ENCODE measurements at regions of chr5 and their contacts with region 1.

Region 1: DNA sequence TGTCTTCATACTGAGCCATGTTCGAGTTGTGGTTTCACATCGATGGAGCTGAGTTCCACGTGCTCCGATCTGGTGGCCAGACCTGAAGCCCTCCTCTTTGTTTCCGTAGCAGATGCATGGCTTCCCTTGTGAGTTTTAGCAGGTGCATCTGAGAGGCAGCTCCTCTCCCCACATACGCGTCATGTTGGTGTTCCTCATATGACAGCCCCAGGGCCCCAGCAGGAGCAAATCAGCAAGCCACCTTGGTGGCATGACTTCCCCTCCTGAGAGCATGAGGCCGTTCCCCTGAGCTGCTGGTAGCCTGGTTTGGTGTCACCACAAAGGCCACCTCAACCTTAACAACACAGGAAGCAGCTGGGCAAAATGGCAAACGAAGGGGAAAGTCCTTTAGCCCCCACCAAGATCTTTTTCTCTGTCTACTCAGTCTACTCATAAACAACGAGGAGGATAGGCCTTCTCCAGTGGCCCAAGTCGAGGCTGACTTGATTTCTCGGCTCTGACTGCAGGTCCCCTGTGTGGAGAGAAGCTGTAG is 5.9 kb downstream of the CYFIP2 start:
- DNase-seq: peak; percentile 89 to 96 (median 93)
- H3K4me3 ChIP-seq: peak overlapping the region in 1 of 2 donors; percentile 33
- H3K4me3 Mint-ChIP-seq: peak overlapping the region; percentile 77 to 97 (median 86)
- H3K27ac ChIP-seq: peak overlapping the region; percentile 69
- H3K27ac Mint-ChIP-seq: peak overlapping the region; percentile 96 to 100 (median 98)
- H3K4me1 ChIP-seq: peaks cover 99% of the 10 kb centered on the region
- H3K4me1 Mint-ChIP-seq: peaks cover 73 to 96% (median 83%) of the 10 kb centered on the region in 4 donors
- H3K27me3 ChIP-seq: no peaks in the 10 kb centered on the region
- H3K27me3 Mint-ChIP-seq: no peaks in the 10 kb centered on the region

Region 2: DNA sequence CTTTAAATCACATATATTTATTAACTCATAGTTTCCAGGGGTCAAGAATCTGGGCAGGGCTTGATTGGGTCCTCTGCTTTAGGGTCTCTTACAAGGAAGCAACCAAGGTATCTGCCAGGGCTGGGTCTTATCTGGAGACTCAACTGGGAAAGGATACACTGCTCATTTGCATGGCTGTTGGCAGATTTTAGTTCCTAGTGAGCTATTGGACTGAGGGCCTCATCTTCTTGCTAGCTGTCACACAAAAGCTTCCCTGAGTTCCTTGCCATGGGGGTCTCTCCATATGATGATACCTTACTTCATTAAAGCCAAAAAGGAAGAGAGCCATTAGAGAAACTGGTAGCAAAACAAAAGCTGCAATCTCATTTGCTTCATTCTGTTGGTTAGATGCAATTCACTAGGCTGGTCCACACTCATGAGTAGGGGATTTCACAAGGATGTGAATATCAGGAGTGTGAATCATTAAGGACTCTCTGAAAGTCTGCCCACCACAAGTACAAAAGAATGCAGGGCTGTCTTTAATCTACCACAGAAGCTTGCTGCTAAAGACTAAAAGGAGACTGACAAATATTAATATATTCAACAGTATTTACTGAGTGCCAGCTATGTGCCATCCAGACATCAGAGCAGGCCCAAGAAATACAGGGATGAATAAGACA is 266.8 kb before region 1 on chr5:
- CTCF ChIA-PET with region 1: no interaction called
- POLR2A ChIA-PET with region 1: no interaction called
- intact Hi-C with region 1: no loop called
- DNase-seq: no peak
- H3K4me3 ChIP-seq: no peak overlapping the region
- H3K4me3 Mint-ChIP-seq: no peak overlapping the region
- H3K27ac ChIP-seq: no peak overlapping the region
- H3K27ac Mint-ChIP-seq: no peak overlapping the region
- H3K4me1 ChIP-seq: no peaks in the 10 kb centered on the region
- H3K4me1 Mint-ChIP-seq: no peaks in the 10 kb centered on the region
- H3K27me3 ChIP-seq: no peaks in the 10 kb centered on the region
- H3K27me3 Mint-ChIP-seq: no peaks in the 10 kb centered on the region

Region 3: GRCh38 chr5:157180374-157181264 is 91.2 kb before region 1 on chr5 and contains the start of gene ITK:
- CTCF ChIA-PET with region 1: interaction called, 4 read pairs
- POLR2A ChIA-PET with region 1: interaction called, 53 read pairs
- intact Hi-C with region 1: no loop called
- DNase-seq: peak; percentile 77 to 85 (median 81)
- H3K4me3 ChIP-seq: peak within 1 kb of the TSS; percentile 83 to 99
- H3K4me3 Mint-ChIP-seq: peak within 1 kb of the TSS; percentile 97 to 100 (median 99)
- H3K27ac ChIP-seq: peak within 1 kb of the TSS; percentile 77
- H3K27ac Mint-ChIP-seq: peak within 1 kb of the TSS; percentile 84 to 99 (median 97)
- H3K4me1 ChIP-seq: peaks cover 47% of the 10 kb centered on the region
- H3K4me1 Mint-ChIP-seq: peaks cover 28 to 67% (median 43%) of the 10 kb centered on the region in 4 donors
- H3K27me3 ChIP-seq: no peaks in the 10 kb centered on the region
- H3K27me3 Mint-ChIP-seq: no peaks in the 10 kb centered on the region
- total RNA-seq, gene ITK: 398 to 421 TPM

Region 4: GRCh38 chr5:157198277-157198986 is 73.4 kb before region 1 on chr5:
- CTCF ChIA-PET with region 1: interaction called, 3 read pairs
- POLR2A ChIA-PET with region 1: interaction called, 53 read pairs
- intact Hi-C with region 1: loop called (anchors 5 kb)
- DNase-seq: peak in 1 of 5 donors; percentile 91
- H3K4me3 ChIP-seq: peak overlapping the region in 1 of 2 donors; percentile 19
- H3K4me3 Mint-ChIP-seq: peak overlapping the region; percentile 68 to 86 (median 72)
- H3K27ac ChIP-seq: peak overlapping the region; percentile 64
- H3K27ac Mint-ChIP-seq: peak overlapping the region; percentile 84 to 96 (median 92)
- H3K4me1 ChIP-seq: peaks cover 99% of the 10 kb centered on the region
- H3K4me1 Mint-ChIP-seq: peaks cover 73 to 96% (median 84%) of the 10 kb centered on the region in 4 donors
- H3K27me3 ChIP-seq: no peaks in the 10 kb centered on the region
- H3K27me3 Mint-ChIP-seq: no peaks in the 10 kb centered on the region

Region 5: GRCh38 chr5:157225469-157226422 is 46.1 kb before region 1 on chr5:
- CTCF ChIA-PET with region 1: interaction called, 3 read pairs
- POLR2A ChIA-PET with region 1: interaction called, 14 read pairs
- intact Hi-C with region 1: no loop called
- DNase-seq: peak in 2 of 5 donors; percentile 32 to 62
- H3K4me3 ChIP-seq: no peak overlapping the region
- H3K4me3 Mint-ChIP-seq: peak overlapping the region in 7 of 8 donors; percentile 12 to 85 (median 61)
- H3K27ac ChIP-seq: peak overlapping the region; percentile 52
- H3K27ac Mint-ChIP-seq: peak overlapping the region; percentile 81 to 93 (median 91)
- H3K4me1 ChIP-seq: peaks cover 95% of the 10 kb centered on the region
- H3K4me1 Mint-ChIP-seq: peaks cover 45 to 66% (median 56%) of the 10 kb centered on the region in 4 donors
- H3K27me3 ChIP-seq: no peaks in the 10 kb centered on the region
- H3K27me3 Mint-ChIP-seq: no peaks in the 10 kb centered on the region

Region 6: GRCh38 chr5:157290981-157291711 is 19.3 kb after region 1 on chr5:
- CTCF ChIA-PET with region 1: interaction called, 14 read pairs
- POLR2A ChIA-PET with region 1: interaction called, 80 read pairs
- intact Hi-C with region 1: loop called (anchors 2 kb)
- DNase-seq: no peak
- H3K4me3 ChIP-seq: no peak overlapping the region
- H3K4me3 Mint-ChIP-seq: no peak overlapping the region
- H3K27ac ChIP-seq: no peak overlapping the region
- H3K27ac Mint-ChIP-seq: peak overlapping the region; percentile 22 to 83 (median 71)
- H3K4me1 ChIP-seq: peaks cover 53% of the 10 kb centered on the region
- H3K4me1 Mint-ChIP-seq: peaks cover 36 to 71% (median 49%) of the 10 kb centered on the region in 4 donors
- H3K27me3 ChIP-seq: no peaks in the 10 kb centered on the region
- H3K27me3 Mint-ChIP-seq: no peaks in the 10 kb centered on the region

Region 7: GRCh38 chr5:157312492-157312891 is 40.7 kb after region 1 on chr5:
- CTCF ChIA-PET with region 1: interaction called, 23 read pairs
- POLR2A ChIA-PET with region 1: interaction called, 96 read pairs
- intact Hi-C with region 1: no loop called
- DNase-seq: peak; percentile 55 to 71 (median 61)
- H3K4me3 ChIP-seq: no peak overlapping the region
- H3K4me3 Mint-ChIP-seq: peak overlapping the region in 1 of 8 donors; percentile 2
- H3K27ac ChIP-seq: no peak overlapping the region
- H3K27ac Mint-ChIP-seq: peak overlapping the region; percentile 24 to 94 (median 77)
- H3K4me1 ChIP-seq: peaks cover 33% of the 10 kb centered on the region
- H3K4me1 Mint-ChIP-seq: peaks cover 23 to 42% (median 34%) of the 10 kb centered on the region in 4 donors
- H3K27me3 ChIP-seq: no peaks in the 10 kb centered on the region
- H3K27me3 Mint-ChIP-seq: no peaks in the 10 kb centered on the region

Region 8: DNA sequence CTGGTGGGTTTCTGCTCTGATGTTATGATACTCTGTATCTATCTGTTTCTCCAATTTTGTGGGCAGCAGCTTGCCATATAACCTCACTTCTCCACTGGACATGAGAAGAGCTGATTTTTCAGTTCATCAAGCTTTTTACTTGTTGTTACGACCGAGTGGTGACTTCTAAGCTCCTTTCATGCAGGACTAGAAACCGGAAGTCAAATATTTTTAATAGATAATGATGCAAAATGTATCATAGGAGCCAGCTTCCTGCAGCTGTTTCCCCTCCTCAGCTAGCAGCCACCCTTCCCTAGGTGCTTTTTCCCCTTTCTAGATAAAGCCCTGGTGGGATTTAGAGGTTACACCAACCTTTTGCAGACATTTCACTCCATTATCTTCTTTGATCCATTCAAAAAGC is 320.8 kb after region 1 on chr5:
- CTCF ChIA-PET with region 1: no interaction called
- POLR2A ChIA-PET with region 1: no interaction called
- intact Hi-C with region 1: no loop called
- DNase-seq: no peak
- H3K4me3 ChIP-seq: no peak overlapping the region
- H3K4me3 Mint-ChIP-seq: peak overlapping the region in 6 of 8 donors; percentile 19 to 84 (median 66)
- H3K27ac ChIP-seq: no peak overlapping the region
- H3K27ac Mint-ChIP-seq: peak overlapping the region in 6 of 7 donors; percentile 1 to 88 (median 56)
- H3K4me1 ChIP-seq: peaks cover 59% of the 10 kb centered on the region
- H3K4me1 Mint-ChIP-seq: peaks cover 41 to 62% (median 54%) of the 10 kb centered on the region in 4 donors
- H3K27me3 ChIP-seq: no peaks in the 10 kb centered on the region
- H3K27me3 Mint-ChIP-seq: no peaks in the 10 kb centered on the region

Region 9: DNA sequence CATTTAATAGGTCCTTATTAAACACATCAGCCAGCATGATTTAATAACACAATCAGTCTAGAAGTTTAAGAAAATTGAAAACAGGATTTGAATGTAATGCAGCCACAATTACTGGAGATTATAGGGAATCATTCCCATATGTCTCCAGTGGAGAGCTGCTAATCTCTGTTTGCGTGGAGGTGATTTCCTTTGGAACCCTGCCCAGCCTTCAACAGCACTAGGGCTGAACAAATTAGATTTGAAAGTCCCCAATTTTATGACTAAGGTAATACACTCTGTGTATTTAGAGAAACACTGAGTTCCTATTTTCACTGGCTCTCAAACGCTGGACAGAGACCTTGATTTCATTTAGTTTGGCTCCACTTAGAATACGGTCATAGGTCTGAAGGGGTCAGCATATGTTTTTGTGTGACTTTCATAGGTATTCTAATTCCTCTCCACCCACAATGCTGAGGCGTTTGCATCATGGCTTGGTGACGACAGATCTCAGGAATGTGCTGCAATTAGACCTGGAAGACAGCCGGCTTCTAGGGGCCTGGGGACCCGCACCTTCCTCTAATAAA is 1319.6 kb after region 1 on chr5:
- CTCF ChIA-PET with region 1: no interaction called
- POLR2A ChIA-PET with region 1: no interaction called
- intact Hi-C with region 1: no loop called
- DNase-seq: no peak
- H3K4me3 ChIP-seq: no peak overlapping the region
- H3K4me3 Mint-ChIP-seq: no peak overlapping the region
- H3K27ac ChIP-seq: no peak overlapping the region
- H3K27ac Mint-ChIP-seq: no peak overlapping the region
- H3K4me1 ChIP-seq: no peaks in the 10 kb centered on the region
- H3K4me1 Mint-ChIP-seq: no peaks in the 10 kb centered on the region
- H3K27me3 ChIP-seq: no peaks in the 10 kb centered on the region
- H3K27me3 Mint-ChIP-seq: peaks cover 0 to 2% of the 10 kb centered on the region in 2 donors